Activated T-helper 1 cell treated with anti-CD3 and anti-CD28 coated beads, Interleukin-12 subunit alpha, Interleukin-12 subunit beta, Interleukin-2, Interleukin-4 antibody, amounts not matched to agents 30 ng/mL and 10 ng/mL and 1 ng/mL, durations not matched to agents 14 hours and 24 hours and 36 hours (primary cell): ENCODE measurements at regions of chr10 and their contacts with region 1.

Region 1: GRCh38 chr10:84149854-84150253 is 10.5 kb downstream of the GHITM start:
- DNase-seq: no peak
- H3K4me3 Mint-ChIP-seq: no peak overlapping the region
- H3K27ac Mint-ChIP-seq: no peak overlapping the region
- H3K4me1 Mint-ChIP-seq: no peaks in the 10 kb centered on the region
- H3K27me3 Mint-ChIP-seq: no peaks in the 10 kb centered on the region

Region 2: GRCh38 chr10:84126785-84127167 is 23.1 kb before region 1 on chr10:
- intact Hi-C with region 1: no loop called
- DNase-seq: no peak
- H3K4me3 Mint-ChIP-seq: no peak overlapping the region
- H3K27ac Mint-ChIP-seq: no peak overlapping the region
- H3K4me1 Mint-ChIP-seq: no peaks in the 10 kb centered on the region
- H3K27me3 Mint-ChIP-seq: peaks cover 10% of the 10 kb centered on the region

Region 3: GRCh38 chr10:84214612-84215235 is 64.9 kb after region 1 on chr10:
- intact Hi-C with region 1: loop called (anchors 2 kb)
- DNase-seq: peak; percentile 19
- H3K4me3 Mint-ChIP-seq: peak overlapping the region; percentile 57
- H3K27ac Mint-ChIP-seq: no peak overlapping the region
- H3K4me1 Mint-ChIP-seq: no peaks in the 10 kb centered on the region
- H3K27me3 Mint-ChIP-seq: peaks cover 7% of the 10 kb centered on the region

Region 4: GRCh38 chr10:84256510-84257342 is 106.9 kb after region 1 on chr10:
- intact Hi-C with region 1: loop called (anchors 2 kb)
- DNase-seq: peak; percentile 11
- H3K4me3 Mint-ChIP-seq: no peak overlapping the region
- H3K27ac Mint-ChIP-seq: no peak overlapping the region
- H3K4me1 Mint-ChIP-seq: peaks cover 6% of the 10 kb centered on the region
- H3K27me3 Mint-ChIP-seq: peaks cover 19% of the 10 kb centered on the region

Region 5: DNA sequence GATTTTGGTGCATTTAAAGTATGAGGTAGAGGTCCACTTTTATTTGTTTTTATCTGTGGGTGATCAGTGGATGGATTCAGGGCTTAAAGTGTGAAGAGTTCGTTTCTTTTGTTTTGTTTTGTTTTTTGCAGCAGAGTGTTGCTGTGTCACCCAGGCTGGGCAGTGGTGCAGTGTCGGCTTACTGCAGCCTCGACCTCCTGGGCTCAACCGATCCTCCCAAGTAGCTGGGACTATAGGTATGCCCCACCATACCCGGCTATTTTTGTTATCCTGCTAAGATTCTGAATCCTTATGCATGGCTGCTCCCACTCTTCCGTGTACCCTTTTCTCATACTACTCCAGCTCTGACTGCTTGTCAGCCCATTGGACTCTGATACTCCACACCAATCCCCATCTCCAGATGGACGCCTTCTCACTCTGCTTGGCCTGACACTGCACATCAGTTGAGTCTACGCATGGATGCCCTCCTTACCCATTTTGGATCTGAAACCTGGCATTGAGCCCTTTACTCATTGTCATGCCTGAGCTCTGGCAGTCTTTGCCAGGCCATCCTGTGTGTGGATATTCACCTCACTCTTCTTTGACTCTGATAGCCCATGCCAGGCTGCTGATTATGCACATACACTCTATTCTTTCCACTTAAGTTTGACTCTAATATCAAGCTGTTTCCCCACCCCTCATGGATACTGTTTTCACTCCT is 298.0 kb after region 1 on chr10:
- intact Hi-C with region 1: no loop called
- DNase-seq: no peak
- H3K4me3 Mint-ChIP-seq: no peak overlapping the region
- H3K27ac Mint-ChIP-seq: no peak overlapping the region
- H3K4me1 Mint-ChIP-seq: no peaks in the 10 kb centered on the region
- H3K27me3 Mint-ChIP-seq: no peaks in the 10 kb centered on the region